Cardiac septum (tissue), 1 donor: ENCODE measurements at regions of chr17 and their contacts with region 1.

Region 1: GRCh38 chr17:35373534-35373983 is at the start of gene SLFN11:
- DNase-seq: peak; percentile 92
- total RNA-seq, gene SLFN11: 23.0 TPM

Region 2: DNA sequence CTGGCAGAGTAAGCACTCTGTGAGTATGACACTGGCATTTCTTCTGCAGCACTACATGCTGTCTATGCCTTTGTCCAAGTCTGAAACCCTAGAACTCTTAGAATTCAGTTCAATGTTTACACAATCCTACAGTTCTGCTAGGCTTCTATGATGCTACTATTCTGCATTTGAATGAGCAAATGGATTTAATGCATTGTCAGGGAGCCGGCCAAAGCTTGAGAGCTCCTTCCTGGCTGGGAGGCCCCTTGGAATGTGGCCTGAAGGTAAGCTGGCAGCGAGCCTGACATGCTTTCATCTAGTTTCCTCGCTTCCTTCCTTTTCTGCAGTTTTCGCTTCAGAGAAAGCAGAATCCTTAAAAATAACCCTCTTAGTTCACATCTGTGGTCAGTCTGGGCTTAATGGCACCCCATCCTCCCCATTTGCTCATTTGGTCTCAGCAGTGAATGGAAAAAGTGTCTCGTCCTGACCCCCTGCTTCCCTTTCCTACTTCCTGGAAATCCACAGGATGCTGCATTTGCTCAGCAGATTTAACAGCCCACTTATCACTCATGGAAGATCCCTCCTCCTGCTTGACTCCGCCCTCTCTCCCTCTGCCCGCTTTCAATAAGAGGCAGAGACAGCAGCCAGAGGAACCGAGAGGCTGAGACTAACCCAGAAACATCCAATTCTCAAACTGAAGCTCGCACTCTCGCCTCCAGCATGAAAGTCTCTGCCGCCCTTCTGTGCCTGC is 1118.7 kb before region 1 on chr17 and contains the start of gene CCL2:
- intact Hi-C with region 1: loop called (anchors 10 kb)
- DNase-seq: peak; percentile 77
- total RNA-seq, gene CCL2: 42.3 TPM

Region 3: GRCh38 chr17:35254107-35254802 is 119.3 kb before region 1 on chr17:
- intact Hi-C with region 1: no loop called
- DNase-seq: no peak

Region 4: DNA sequence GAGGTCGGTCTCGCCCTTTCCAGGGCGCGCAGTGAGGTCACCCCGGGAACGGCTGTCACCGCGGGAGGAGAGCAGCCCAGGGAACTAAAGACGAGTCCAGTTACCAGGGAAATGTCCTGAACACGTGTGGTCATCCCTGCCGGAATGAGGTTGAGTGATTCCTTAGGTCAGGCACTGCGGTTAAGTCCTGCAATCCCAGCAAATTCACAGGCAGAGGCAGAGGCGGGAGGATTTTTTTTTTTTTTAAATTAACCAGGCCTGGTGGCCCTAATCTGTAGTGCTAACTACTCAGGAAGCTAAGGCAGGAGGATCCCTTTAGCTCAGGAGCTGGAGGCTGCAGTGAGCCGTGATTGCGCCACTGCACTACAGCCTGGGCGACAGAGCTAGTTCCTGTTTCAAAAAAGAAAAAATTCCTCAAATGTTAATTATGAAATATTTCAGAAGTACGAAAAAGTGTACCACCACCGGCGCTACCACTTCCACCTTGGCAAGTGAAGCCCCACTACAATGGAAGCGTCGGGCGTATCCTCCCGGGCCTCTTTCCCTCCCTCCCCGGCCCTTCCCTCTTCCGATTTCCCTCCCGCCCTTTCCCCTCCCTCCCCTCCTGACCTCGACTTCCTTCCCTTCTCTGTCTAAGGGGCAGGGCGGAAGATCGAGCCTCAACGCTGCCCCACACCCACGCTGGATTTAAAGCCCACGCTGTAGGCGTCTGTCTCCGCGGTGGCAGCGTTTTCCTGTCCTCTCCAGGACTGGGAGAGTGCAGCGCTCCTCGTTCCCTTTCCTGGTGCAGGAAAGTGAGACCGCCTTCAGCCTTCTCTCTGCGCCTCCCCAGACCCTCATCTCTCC is 27.4 kb before region 1 on chr17:
- intact Hi-C with region 1: loop called (anchors 2 kb)
- DNase-seq: peak; percentile 93

Region 5: DNA sequence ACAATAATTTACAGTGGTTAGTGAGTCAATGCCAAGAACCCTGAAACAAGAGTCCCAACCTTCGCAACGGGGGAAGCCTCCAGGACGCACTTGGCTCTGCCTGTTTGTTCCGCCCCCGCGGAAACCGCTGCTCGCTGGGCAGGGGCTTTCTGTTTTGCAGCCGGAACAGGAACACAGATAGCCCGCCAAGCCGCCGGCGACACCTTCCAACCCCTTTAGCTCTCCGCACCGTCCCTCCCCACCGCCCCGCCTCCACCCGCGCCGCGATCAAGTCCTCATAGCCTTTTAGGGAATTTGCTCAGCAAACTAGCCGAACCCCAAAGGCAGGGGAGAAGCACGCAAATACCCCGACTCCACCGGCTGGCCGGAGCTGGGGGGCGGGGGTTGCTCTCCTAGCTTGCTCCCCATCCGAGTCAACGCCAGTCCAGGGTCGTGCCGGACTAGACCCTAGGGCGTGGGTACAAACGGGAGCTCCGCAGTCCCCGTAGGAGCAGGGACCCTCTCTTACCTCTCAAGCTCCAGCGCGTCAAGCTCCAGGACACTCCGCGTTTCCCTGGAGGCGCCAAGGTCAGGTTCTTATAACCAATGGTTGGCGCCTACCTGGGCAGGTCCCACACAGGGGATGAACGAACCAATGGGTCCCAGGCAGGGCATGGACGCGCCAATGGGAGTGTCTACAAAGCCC is 74.8 kb after region 1 on chr17 and contains the start of gene SLFN13:
- intact Hi-C with region 1: loop called (anchors 1 kb)
- DNase-seq: peak; percentile 93
- total RNA-seq, gene SLFN13: 4.8 TPM

Region 6: DNA sequence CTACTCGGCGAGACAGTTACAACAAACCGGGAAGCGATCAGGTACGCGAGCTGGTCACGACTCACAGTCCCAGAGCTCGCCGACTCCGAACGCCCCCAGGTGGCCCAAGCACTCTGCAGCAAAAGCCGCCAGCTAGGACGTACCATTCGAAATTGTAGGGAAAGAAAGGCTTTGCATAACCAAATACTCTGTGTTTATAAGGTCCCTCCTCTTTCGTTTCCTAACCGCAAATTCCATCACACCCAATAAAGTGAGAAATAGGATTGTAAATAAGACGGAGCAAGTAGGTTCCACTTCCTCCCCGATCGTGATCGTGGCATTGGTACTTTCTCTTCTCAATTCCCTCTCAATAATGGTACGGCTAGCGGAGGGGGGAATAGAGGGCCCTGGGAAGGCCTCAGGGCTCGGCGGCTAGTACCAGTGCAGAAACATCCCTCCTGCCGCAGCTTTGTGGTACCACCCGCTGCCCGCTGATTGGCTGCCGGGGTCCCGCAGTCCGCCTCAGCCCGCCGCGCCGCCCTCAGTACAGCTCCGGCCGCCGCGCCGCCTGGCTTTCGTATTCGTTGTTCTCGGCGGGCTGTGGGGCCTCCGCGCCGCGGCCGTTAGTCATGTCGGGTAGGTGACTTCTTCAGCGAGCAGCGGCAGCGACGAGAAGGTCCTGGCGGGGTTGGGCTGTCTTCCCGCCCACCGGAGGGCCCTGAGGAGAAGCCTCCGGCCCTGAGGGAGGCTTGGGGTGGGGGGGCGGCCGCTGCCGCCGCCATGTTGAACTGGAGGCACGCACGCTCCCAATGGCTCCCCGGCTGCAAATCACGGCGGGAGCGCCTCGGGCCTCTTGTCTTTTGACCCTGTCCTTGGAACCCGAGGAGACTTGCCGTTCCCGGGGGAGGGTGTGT is 435.6 kb after region 1 on chr17 and contains the start of gene TAF15:
- intact Hi-C with region 1: loop called (anchors 10 kb)
- DNase-seq: peak; percentile 98
- total RNA-seq, gene TAF15: 140 TPM